WTC11 (cell line): ENCODE measurements at regions of chr3 and their contacts with region 1.

Region 1: GRCh38 chr3:132180337-132180791 is 136.8 kb upstream of the ACP3 start:
- DNase-seq: no peak
- ATAC-seq: peak; percentile 94
- H3K4me3 Mint-ChIP-seq: no peak overlapping the region
- H3K27ac Mint-ChIP-seq: peak overlapping the region; percentile 21; the same call in 1 of the 2 replicates
- H3K4me1 Mint-ChIP-seq: peaks cover 11% of the 10 kb centered on the region
- H3K27me3 Mint-ChIP-seq: no peaks in the 10 kb centered on the region
- CTCF ChIP-seq: peak; percentile 55

Region 2: GRCh38 chr3:132161608-132162007 is 18.8 kb before region 1 on chr3:
- CTCF ChIA-PET with region 1: interaction called, 10 read pairs
- POLR2A ChIA-PET with region 1: no interaction called
- DNase-seq: peak; percentile 27
- ATAC-seq: peak; percentile 97
- H3K4me3 Mint-ChIP-seq: no peak overlapping the region
- H3K27ac Mint-ChIP-seq: no peak overlapping the region
- H3K4me1 Mint-ChIP-seq: no peaks in the 10 kb centered on the region; the same call in 1 of the 2 replicates
- H3K27me3 Mint-ChIP-seq: peaks cover 2% of the 10 kb centered on the region; the same call in 1 of the 2 replicates
- CTCF ChIP-seq: no peak